ENCODE measurements at regions of chr7 and their contacts with region 1.

Region 1: DNA sequence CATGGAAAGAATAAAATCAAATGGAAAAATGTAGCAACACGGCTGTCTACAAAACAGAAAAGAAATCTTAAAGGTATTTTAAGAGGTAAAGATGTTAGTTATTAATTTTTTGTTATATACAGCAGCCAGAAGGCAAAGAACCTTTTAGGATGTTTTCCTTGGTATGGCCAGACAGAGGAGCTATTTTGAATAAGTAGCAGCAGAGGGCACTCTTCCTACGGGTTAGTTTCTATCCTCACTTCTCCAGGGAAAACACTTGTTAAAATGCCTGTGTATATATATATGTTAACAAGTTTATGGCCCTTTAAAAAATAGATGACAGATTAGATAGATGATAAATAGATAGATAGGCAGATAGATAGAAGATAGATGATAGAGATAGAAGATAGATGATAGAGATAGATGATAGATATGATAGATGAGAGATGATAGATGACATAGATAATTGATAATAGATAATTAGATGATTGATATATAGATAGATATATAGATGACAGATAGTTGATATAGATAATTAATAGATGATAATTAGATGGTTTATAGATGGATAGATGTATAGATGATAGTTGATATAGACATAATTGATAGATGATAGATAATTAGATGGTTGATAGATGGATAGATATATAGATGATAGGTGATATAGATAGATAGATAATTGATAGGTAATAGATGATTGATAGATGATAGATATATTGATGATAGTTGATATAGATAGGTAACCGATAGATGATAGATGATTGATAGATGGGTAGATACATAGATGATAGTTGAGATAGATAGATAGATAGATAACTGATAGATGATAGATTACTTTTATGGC is 57.8 kb upstream of the WIPF3 start:
- H3K4me3 ChIP-seq: no peak overlapping the region
- H3K27ac ChIP-seq: no peak overlapping the region
- H3K4me1 ChIP-seq: no peaks in the 10 kb centered on the region
- CTCF ChIP-seq: 0 out of 2 replicates have a peak, but pooled peaks have one; percentile 8

Region 2: DNA sequence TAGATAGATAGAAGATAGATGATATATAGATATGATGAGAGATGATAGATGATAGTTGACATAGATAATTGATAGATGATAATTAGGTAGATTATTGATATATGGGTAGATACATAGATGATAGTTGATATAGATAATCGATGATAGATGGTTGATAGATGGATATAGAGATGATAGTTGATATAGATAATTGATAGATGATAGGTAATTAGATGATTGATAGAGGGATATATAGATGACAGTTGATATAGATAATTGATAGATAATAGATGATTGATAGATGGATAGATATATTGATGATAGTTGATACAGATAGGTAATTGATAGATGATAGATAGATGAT is 112.5 kb before region 1 on chr7:
- CTCF ChIA-PET with region 1: interaction called, 12 read pairs
- POLR2A ChIA-PET with region 1: no interaction called
- H3K4me3 ChIP-seq: no peak overlapping the region
- H3K27ac ChIP-seq: no peak overlapping the region
- H3K4me1 ChIP-seq: no peaks in the 10 kb centered on the region
- CTCF ChIP-seq: no peak

Measured in HEK293 (cell line).